PC-3 (cell line): ENCODE measurements at regions of chr19 and their contacts with region 1.

Region 1: GRCh38 chr19:47745010-47745901 is at the start of gene NOP53:
- DNase-seq: peak; percentile 94
- ATAC-seq: peak; percentile 52
- H3K4me3 ChIP-seq: peak within 1 kb of the TSS; percentile 88
- H3K27ac ChIP-seq: peak within 1 kb of the TSS; percentile 75
- H3K4me1 ChIP-seq: peaks cover 23% of the 10 kb centered on the region
- H3K27me3 ChIP-seq: no peaks in the 10 kb centered on the region
- CTCF ChIP-seq: no peak
- total RNA-seq, gene NOP53: 61.5 and 83.9 TPM in 2 replicates

Region 2: GRCh38 chr19:47707135-47707925 is 37.9 kb before region 1 on chr19:
- CTCF ChIA-PET with region 1: interaction called, 8 read pairs
- POLR2A ChIA-PET with region 1: no interaction called
- intact Hi-C with region 1: loop called (anchors 2 kb)
- DNase-seq: peak; percentile 88
- ATAC-seq: peak; percentile 90
- H3K4me3 ChIP-seq: no peak overlapping the region
- H3K27ac ChIP-seq: no peak overlapping the region
- H3K4me1 ChIP-seq: no peaks in the 10 kb centered on the region
- H3K27me3 ChIP-seq: no peaks in the 10 kb centered on the region
- CTCF ChIP-seq: peak; percentile 74

Region 3: GRCh38 chr19:47729992-47730889 is 15.0 kb before region 1 on chr19:
- CTCF ChIA-PET with region 1: no interaction called
- POLR2A ChIA-PET with region 1: no interaction called
- intact Hi-C with region 1: loop called (anchors 2 kb)
- DNase-seq: peak; percentile 80
- ATAC-seq: peak; percentile 75
- H3K4me3 ChIP-seq: peak overlapping the region; percentile 74
- H3K27ac ChIP-seq: peak overlapping the region; percentile 100
- H3K4me1 ChIP-seq: peaks cover 16% of the 10 kb centered on the region
- H3K27me3 ChIP-seq: no peaks in the 10 kb centered on the region
- CTCF ChIP-seq: no peak

Region 4: DNA sequence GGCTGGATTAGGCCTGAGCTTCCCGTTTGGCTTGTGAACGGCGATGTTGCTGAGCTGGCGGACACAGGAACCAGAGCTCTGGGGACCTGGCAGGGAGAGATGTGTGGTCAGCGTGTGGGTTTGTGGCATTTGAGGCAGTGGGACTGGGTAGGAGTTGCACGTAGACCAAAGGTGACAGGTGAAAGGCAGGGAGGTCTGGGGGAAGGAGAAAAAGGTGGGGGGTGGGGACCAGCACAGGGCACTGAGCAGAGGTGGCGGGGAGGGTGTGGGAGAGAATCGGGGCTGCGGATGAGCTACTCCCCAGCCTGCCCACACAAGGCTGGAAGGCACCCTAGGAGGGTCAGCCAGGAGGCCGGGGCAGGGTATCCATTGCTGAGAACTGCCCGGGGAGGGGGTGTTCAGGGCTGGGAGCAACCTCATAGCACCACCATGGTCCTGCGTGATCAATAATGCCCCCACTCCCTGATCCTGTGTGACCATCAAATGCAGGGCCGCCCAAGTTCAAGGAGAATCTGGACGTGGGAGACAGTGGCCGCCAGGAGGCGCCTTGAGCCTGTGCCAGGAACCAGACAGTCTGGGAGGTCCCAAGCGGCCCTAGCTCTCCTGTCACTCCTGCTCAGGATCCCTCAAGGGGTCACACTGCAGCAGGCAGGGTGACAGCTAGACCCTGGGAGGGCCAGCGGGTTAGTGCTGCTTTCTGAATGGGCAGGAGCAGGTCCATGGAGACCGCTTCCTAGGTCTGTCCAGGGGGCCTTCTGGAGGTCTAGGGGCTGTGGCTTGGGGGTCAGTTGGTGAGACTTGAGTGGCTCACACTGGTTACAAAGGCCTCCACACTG is 20.5 kb after region 1 on chr19:
- CTCF ChIA-PET with region 1: interaction called, 11 read pairs
- POLR2A ChIA-PET with region 1: no interaction called
- intact Hi-C with region 1: no loop called
- DNase-seq: peak; percentile 43
- ATAC-seq: peak; percentile 69
- H3K4me3 ChIP-seq: no peak overlapping the region
- H3K27ac ChIP-seq: no peak overlapping the region
- H3K4me1 ChIP-seq: no peaks in the 10 kb centered on the region
- H3K27me3 ChIP-seq: no peaks in the 10 kb centered on the region
- CTCF ChIP-seq: peak; percentile 75

Region 5: GRCh38 chr19:47776568-47776967 is 31.3 kb after region 1 on chr19:
- CTCF ChIA-PET with region 1: no interaction called
- POLR2A ChIA-PET with region 1: no interaction called
- intact Hi-C with region 1: no loop called
- DNase-seq: peak; percentile 60
- ATAC-seq: peak; percentile 21
- H3K4me3 ChIP-seq: no peak overlapping the region
- H3K27ac ChIP-seq: peak overlapping the region; percentile 11; the same call in 1 of the 2 replicates
- H3K4me1 ChIP-seq: peaks cover 8% of the 10 kb centered on the region
- H3K27me3 ChIP-seq: no peaks in the 10 kb centered on the region
- CTCF ChIP-seq: no peak